H1 (cell line): ENCODE measurements at regions of chr17 and their contacts with region 1.

Region 1: GRCh38 chr17:31388770-31389661 is 2.5 kb upstream of the RAB11FIP4 start:
- DNase-seq: peak in 1 of 2 experiments; percentile 87
- H3K4me3 ChIP-seq: peak overlapping the region in 1 of 4 experiments; percentile 30; a peak in 1 of 8 replicates
- H3K27ac ChIP-seq: no peak overlapping the region
- H3K4me1 ChIP-seq: peaks cover 0 to 14% (median 9%) of the 10 kb centered on the region in 4 experiments; a peak in 6 of 7 replicates
- H3K27me3 ChIP-seq: peaks cover 1 to 29% (median 22%) of the 10 kb centered on the region in 4 experiments
- CTCF ChIP-seq: peak; percentile 78 to 89 (median 85)
- EP300 ChIP-seq: no peak
- POLR2A ChIP-seq: no peak
- RAD21 ChIP-seq: peak; percentile 67 to 79

Region 2: DNA sequence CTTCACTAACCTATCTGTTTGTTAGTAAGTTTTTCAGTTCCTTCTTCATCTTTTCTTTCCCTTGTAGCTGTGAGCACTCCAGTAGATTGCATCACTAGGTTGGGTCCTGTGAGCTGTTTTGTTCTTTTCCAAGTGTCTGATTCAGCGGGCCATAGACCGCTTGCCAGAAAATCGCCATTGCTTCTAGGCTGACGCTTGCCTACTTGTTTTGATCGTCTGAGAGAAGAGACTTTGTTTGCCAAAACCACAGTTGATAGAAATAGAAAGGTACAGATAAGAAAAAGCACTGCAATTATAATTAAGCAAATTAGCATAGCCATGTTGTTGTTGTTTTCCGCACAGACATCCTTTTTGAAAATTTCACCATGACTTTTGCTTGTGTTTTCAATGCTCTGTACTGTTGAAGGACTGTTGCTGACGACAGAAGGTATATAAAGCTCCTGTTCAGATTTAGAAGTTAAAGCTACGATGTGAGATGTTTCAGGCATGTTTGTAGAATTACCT is 70.7 kb before region 1 on chr17:
- CTCF ChIA-PET with region 1: no interaction called
- POLR2A ChIA-PET with region 1: no interaction called
- DNase-seq: no peak
- H3K4me3 ChIP-seq: no peak overlapping the region
- H3K27ac ChIP-seq: no peak overlapping the region
- H3K4me1 ChIP-seq: 0 out of 7 replicates have a peak, but pooled peaks cover 0 to 4% (median 0%) of the 10 kb centered on the region in 4 experiments
- H3K27me3 ChIP-seq: no peaks in the 10 kb centered on the region
- CTCF ChIP-seq: no peak
- EP300 ChIP-seq: no peak
- POLR2A ChIP-seq: no peak
- RAD21 ChIP-seq: no peak

Region 3: DNA sequence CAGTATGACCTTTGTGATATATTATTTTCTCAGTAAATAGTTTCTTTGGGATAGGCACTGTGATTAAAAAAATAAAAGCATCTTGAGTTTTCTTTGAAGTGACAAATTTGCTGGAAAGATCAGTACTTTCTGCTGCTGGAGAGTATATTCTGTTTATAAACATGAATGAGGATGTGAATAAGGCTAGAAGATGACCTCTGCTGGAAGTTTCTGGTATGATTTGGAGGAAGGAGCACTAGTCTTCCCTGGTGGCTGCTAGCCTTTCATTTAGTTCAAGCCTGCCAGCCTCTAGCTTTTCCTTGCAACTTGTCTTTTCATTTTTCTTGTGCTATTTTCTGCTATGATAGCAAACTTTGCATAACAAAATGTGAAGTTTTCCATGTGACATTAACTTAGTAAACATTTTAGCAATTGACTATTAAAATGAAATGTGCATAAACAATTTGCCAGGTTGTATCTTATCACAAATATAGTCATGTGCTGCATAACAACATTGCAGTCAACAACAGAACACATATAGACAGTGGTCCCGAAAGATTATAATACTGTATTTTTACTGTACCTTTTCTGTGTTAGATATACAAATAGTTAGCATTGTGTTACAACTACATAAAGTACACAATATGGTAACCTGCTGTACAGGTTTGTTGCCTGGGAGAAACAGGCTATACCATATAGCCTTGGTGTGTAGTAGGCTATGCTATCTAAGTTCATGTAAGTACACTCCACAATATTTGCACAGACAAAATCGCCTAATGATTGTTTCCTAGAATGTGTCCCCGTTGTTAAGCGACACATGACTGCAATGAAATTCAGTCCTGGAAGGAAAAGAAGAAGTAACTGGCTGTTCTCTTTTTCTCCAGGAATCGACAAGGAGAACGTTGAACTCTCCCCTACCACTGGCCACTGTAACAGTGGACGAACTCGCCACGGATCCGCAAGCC is 15.6 kb before region 1 on chr17:
- CTCF ChIA-PET with region 1: interaction called, 23 read pairs
- POLR2A ChIA-PET with region 1: interaction called, 3 read pairs
- DNase-seq: no peak
- H3K4me3 ChIP-seq: no peak overlapping the region
- H3K27ac ChIP-seq: no peak overlapping the region
- H3K4me1 ChIP-seq: peaks cover 0 to 5% (median 1%) of the 10 kb centered on the region in 4 experiments; a peak in 3 of 7 replicates
- H3K27me3 ChIP-seq: no peaks in the 10 kb centered on the region
- CTCF ChIP-seq: peak in 2 of 3 experiments; percentile 55 to 62; a peak in 3 of 4 replicates
- EP300 ChIP-seq: no peak
- POLR2A ChIP-seq: no peak
- RAD21 ChIP-seq: peak; percentile 66 to 72

Region 4: GRCh38 chr17:31378638-31379037 is 10.4 kb before region 1 on chr17:
- CTCF ChIA-PET with region 1: interaction called, 23 read pairs
- POLR2A ChIA-PET with region 1: interaction called, 4 read pairs
- DNase-seq: no peak
- H3K4me3 ChIP-seq: no peak overlapping the region
- H3K27ac ChIP-seq: no peak overlapping the region
- H3K4me1 ChIP-seq: peaks cover 3 to 10% (median 6%) of the 10 kb centered on the region in 4 experiments
- H3K27me3 ChIP-seq: no peaks in the 10 kb centered on the region
- CTCF ChIP-seq: peak; percentile 29 to 49 (median 44)
- EP300 ChIP-seq: no peak
- POLR2A ChIP-seq: no peak
- RAD21 ChIP-seq: peak in 1 of 2 experiments; percentile 25; a peak in 1 of 4 replicates

Region 5: DNA sequence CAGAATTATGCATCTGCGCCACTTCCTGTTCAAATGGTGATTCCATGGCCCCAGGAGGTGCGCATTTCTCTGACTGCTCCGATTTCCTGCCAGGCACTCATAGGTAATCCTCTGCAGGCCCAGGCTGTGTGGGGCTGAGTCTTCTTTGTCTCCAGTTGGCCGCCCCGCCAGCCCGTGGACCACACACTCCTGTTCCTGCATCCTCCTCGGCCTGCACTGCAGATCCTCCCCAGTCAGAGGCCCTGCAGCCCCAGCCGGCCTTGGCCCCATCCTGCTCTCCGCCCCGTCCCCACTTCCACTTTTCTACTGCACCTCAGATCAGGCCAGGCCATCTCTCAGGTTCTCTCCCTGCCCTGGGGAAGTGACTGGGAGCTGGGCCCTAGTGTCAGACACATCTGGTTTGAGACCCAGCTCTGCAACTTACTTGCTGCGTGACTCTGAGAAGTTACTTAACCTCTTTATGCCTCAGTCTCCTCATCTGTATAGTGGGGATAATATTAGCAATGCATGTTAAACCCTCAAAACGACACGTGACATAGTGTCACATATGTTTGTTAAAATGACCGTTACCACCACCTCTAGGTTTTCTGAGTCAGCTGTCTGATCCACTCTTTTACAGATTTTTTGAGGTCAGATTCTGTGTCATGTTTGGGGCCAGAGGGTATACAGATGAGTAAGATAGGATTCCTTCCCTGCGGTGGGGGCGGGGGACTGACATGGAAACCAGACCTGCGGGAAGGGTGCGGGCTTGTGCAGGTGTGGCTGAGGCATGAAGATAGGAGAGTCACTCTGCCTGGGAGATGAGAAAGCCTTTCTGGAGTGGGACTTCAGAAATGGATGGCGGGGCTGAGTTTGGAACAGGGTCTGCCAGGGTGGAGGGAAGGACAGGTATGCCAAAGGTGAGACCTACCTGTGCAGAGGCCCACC is 15.3 kb after region 1 on chr17:
- CTCF ChIA-PET with region 1: interaction called, 18 read pairs
- POLR2A ChIA-PET with region 1: no interaction called
- DNase-seq: no peak
- H3K4me3 ChIP-seq: no peak overlapping the region
- H3K27ac ChIP-seq: no peak overlapping the region
- H3K4me1 ChIP-seq: peaks cover 1 to 3% (median 2%) of the 10 kb centered on the region in 4 experiments; a peak in 3 of 7 replicates
- H3K27me3 ChIP-seq: no peaks in the 10 kb centered on the region
- CTCF ChIP-seq: no peak
- EP300 ChIP-seq: no peak
- POLR2A ChIP-seq: no peak
- RAD21 ChIP-seq: no peak

Region 6: DNA sequence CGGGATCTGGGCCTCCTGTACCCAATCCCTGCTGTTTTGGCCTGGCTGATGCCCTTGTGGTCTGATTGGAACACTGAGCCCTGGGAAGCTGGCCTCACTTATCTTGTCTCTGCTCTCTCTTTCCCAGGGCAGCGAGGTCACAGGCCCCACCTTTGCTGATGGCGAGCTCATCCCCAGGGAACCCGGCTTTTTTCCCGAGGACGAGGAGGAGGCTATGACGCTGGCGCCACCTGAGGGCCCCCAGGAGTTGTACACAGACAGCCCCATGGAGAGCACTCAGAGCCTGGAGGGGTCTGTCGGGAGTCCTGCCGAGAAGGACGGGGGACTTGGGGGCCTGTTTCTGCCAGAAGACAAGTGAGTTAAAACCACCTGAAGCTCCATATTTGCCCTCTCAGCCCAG is 128.5 kb after region 1 on chr17:
- CTCF ChIA-PET with region 1: interaction called, 35 read pairs
- POLR2A ChIA-PET with region 1: no interaction called
- DNase-seq: peak in 1 of 2 experiments; percentile 73
- H3K4me3 ChIP-seq: no peak overlapping the region
- H3K27ac ChIP-seq: no peak overlapping the region
- H3K4me1 ChIP-seq: peaks cover 0 to 4% (median 1%) of the 10 kb centered on the region in 4 experiments; a peak in 3 of 7 replicates
- H3K27me3 ChIP-seq: no peaks in the 10 kb centered on the region
- CTCF ChIP-seq: peak; percentile 57 to 71 (median 69)
- EP300 ChIP-seq: no peak
- POLR2A ChIP-seq: no peak
- RAD21 ChIP-seq: peak; percentile 82 to 91